T-cell (primary cell): ENCODE measurements at regions of chr1 and their contacts with region 1.

Region 1: GRCh38 chr1:39845275-39846116 is 37.8 kb downstream of the TRIT1 start:
- DNase-seq: peak; percentile 40 to 94 (median 85)
- ATAC-seq: peak; percentile 87 to 99 (median 89)
- H3K4me3 ChIP-seq: peak overlapping the region in 1 of 2 donors; percentile 10
- H3K4me3 Mint-ChIP-seq: peak overlapping the region; percentile 58 to 65 (median 61)
- H3K27ac ChIP-seq: peak overlapping the region; percentile 71
- H3K27ac Mint-ChIP-seq: peak overlapping the region; percentile 96 to 98
- H3K4me1 ChIP-seq: peaks cover 33 to 43% of the 10 kb centered on the region in 2 experiments
- H3K4me1 Mint-ChIP-seq: peaks cover 56 to 58% (median 58%) of the 10 kb centered on the region in 3 donors
- H3K27me3 ChIP-seq: no peaks in the 10 kb centered on the region
- H3K27me3 Mint-ChIP-seq: no peaks in the 10 kb centered on the region

Region 2: GRCh38 chr1:39683591-39684312 is 161.7 kb before region 1 on chr1:
- CTCF ChIA-PET with region 1: no interaction called
- POLR2A ChIA-PET with region 1: no interaction called
- DNase-seq: peak in 34 of 35 experiments; percentile 28 to 72 (median 55)
- ATAC-seq: peak; percentile 72 to 77 (median 74)
- H3K4me3 ChIP-seq: peak overlapping the region in 1 of 2 donors; percentile 23
- H3K4me3 Mint-ChIP-seq: peak overlapping the region; percentile 49 to 65 (median 53)
- H3K27ac ChIP-seq: no peak overlapping the region
- H3K27ac Mint-ChIP-seq: peak overlapping the region; percentile 52 to 55
- H3K4me1 ChIP-seq: peaks cover 0 to 31% of the 10 kb centered on the region in 2 experiments
- H3K4me1 Mint-ChIP-seq: peaks cover 37 to 45% (median 44%) of the 10 kb centered on the region in 3 donors
- H3K27me3 ChIP-seq: peaks cover 7 to 33% of the 10 kb centered on the region in 2 experiments
- H3K27me3 Mint-ChIP-seq: peaks cover 8 to 9% of the 10 kb centered on the region in 2 donors

Region 3: GRCh38 chr1:39816415-39817090 is 28.9 kb before region 1 on chr1:
- CTCF ChIA-PET with region 1: interaction called, 3 to 11 read pairs
- POLR2A ChIA-PET with region 1: no interaction called
- DNase-seq: peak in 33 of 35 experiments; percentile 11 to 76 (median 44)
- ATAC-seq: peak; percentile 71 to 74 (median 72)
- H3K4me3 ChIP-seq: peak overlapping the region in 1 of 2 donors; percentile 23
- H3K4me3 Mint-ChIP-seq: peak overlapping the region; percentile 67 to 83 (median 78)
- H3K27ac ChIP-seq: no peak overlapping the region
- H3K27ac Mint-ChIP-seq: no peak overlapping the region
- H3K4me1 ChIP-seq: peaks cover 0 to 17% of the 10 kb centered on the region in 2 experiments
- H3K4me1 Mint-ChIP-seq: peaks cover 5 to 17% (median 10%) of the 10 kb centered on the region in 3 donors
- H3K27me3 ChIP-seq: peaks cover 0 to 48% of the 10 kb centered on the region in 2 experiments
- H3K27me3 Mint-ChIP-seq: peaks cover 13 to 21% of the 10 kb centered on the region in 2 donors

Region 4: DNA sequence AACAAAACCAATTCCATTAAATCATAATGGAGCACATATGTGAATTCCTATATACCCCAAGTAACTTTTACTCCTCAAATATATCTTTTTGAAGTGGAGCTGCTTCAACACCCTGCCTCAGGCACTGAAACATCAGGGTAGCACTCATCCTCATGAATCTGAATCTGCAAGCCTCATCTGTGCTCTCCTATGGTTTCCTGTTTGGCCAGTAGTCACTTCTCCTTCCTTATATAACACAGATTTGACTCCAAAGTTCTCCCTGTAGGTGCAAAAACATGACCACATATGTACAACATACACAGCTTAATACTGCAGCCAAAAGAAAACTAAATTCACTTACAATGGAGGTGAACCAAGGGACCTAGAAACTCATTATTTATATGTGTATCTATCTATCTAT is 30.6 kb after region 1 on chr1:
- CTCF ChIA-PET with region 1: no interaction called
- POLR2A ChIA-PET with region 1: interaction called in 1 of 2 experiments, 11 read pairs
- DNase-seq: no peak
- ATAC-seq: no peak
- H3K4me3 ChIP-seq: no peak overlapping the region
- H3K4me3 Mint-ChIP-seq: no peak overlapping the region
- H3K27ac ChIP-seq: no peak overlapping the region
- H3K27ac Mint-ChIP-seq: no peak overlapping the region
- H3K4me1 ChIP-seq: peaks cover 0 to 2% of the 10 kb centered on the region in 2 experiments
- H3K4me1 Mint-ChIP-seq: peaks cover 53 to 59% (median 55%) of the 10 kb centered on the region in 3 donors
- H3K27me3 ChIP-seq: no peaks in the 10 kb centered on the region
- H3K27me3 Mint-ChIP-seq: no peaks in the 10 kb centered on the region